Activated CD8-positive, alpha-beta T cell treated with anti-CD3 and anti-CD28 coated beads, Interleukin-2, amount 10 ng/mL, durations not matched to agents 7 days and 5 days (primary cell): ENCODE measurements at regions of chr17 and their contacts with region 1.

Region 1: DNA sequence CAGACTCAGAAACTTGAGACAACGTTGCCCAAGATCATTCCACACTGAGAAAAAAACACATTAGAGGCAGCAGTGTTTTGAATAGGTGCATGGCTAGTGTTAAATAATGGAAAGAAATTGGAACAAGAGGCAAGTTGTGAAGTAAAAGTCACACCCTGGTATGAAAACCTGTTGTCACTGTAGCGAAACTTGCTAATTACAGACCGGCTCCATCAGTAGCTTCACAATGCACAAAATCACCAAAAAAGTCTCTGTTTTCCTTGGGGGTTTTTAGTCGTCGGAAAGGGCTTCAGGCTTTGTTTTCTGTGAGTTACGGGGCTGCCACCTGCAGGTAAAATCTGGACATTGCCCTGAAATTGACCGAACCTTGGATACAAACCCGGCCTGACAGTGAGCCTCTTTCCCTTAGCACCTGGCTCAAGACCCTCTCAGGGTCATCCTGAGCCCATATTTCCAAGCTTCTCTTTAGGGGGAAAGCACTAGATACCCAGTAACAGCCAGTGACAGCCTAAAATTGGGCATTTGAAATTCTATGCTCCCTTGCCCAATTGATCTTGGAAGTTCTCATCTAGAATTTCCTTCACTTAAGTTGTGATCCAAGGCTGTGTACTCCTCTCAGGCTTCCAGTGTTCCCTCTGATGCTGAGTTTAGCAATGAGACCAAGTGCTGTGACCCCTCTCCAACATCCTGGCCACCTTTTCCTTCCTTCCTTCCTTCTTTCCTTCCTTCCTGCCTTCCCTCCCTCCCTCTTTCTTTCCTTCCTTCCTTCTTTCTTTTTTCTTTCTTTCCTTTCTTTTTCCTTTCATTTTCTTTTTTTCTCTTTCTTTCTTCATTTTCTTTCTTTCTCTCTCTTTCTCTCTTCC is 7.2 kb upstream of the GRB2 start:
- DNase-seq: peak; percentile 84
- ATAC-seq: peak; percentile 83
- H3K4me3 Mint-ChIP-seq: peak overlapping the region; percentile 55
- H3K27ac Mint-ChIP-seq: peak overlapping the region; percentile 72
- H3K4me1 Mint-ChIP-seq: peaks cover 39% of the 10 kb centered on the region
- H3K27me3 Mint-ChIP-seq: peaks cover 2% of the 10 kb centered on the region

Region 2: DNA sequence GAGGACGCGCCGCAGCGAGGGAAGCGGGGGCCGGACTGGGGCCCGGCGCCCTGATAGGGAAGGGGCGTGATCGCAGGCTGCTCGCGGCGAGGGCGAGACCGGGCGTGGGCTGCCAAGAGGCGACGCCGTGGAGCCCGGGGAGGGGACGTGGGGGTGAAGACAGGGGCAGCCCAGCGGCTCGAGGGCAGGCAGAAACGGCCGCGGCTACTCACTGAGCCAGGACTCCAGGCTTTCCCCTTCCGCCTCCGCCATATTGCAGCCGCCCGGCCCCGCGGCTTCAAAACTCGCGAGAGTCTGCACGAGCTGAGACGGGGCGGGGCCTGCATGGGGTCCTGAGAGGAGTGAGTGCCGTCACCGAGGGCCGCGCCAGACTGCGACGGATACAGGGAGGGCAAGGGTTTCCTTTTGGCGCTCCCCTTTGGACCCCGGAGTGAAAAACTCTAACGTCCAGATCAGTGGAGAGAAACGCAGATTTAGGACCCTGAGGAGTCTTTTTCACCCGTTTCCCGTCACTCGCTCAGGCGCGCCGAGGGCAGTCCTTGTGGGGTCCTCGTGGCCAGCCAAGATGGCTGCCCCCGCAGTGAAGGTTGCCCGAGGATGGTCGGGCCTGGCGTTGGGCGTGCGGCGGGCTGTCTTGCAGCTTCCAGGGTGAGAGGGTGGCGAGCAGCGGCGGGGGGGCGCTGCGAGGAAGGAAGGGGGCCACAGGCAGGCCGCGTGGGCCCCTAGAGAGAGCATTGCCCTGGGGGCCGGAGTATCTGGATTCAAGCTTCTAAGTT is 151.2 kb before region 1 on chr17 and contains the starts of genes GGA3 and MRPS7:
- CTCF ChIA-PET with region 1: interaction called, 20 read pairs
- POLR2A ChIA-PET with region 1: interaction called, 5 read pairs
- DNase-seq: peak; percentile 97
- ATAC-seq: peak; percentile 94
- H3K4me3 Mint-ChIP-seq: peak within 1 kb of the TSS; percentile 95
- H3K27ac Mint-ChIP-seq: peak within 1 kb of the TSS; percentile 99
- H3K4me1 Mint-ChIP-seq: peaks cover 38% of the 10 kb centered on the region
- H3K27me3 Mint-ChIP-seq: no peaks in the 10 kb centered on the region
- total RNA-seq, gene GGA3: 65.7 to 75.4 TPM
- total RNA-seq, gene MRPS7: 62.1 to 66.1 TPM

Region 3: GRCh38 chr17:75289115-75289831 is 123.4 kb before region 1 on chr17 and contains the start of gene SLC25A19:
- CTCF ChIA-PET with region 1: interaction called, 32 read pairs
- POLR2A ChIA-PET with region 1: interaction called, 9 read pairs
- DNase-seq: peak; percentile 99
- ATAC-seq: peak; percentile 92
- H3K4me3 Mint-ChIP-seq: peak within 1 kb of the TSS; percentile 97
- H3K27ac Mint-ChIP-seq: peak within 1 kb of the TSS; percentile 100
- H3K4me1 Mint-ChIP-seq: peaks cover 27% of the 10 kb centered on the region
- H3K27me3 Mint-ChIP-seq: no peaks in the 10 kb centered on the region
- total RNA-seq, gene SLC25A19: 41.1 to 43.6 TPM

Region 4: DNA sequence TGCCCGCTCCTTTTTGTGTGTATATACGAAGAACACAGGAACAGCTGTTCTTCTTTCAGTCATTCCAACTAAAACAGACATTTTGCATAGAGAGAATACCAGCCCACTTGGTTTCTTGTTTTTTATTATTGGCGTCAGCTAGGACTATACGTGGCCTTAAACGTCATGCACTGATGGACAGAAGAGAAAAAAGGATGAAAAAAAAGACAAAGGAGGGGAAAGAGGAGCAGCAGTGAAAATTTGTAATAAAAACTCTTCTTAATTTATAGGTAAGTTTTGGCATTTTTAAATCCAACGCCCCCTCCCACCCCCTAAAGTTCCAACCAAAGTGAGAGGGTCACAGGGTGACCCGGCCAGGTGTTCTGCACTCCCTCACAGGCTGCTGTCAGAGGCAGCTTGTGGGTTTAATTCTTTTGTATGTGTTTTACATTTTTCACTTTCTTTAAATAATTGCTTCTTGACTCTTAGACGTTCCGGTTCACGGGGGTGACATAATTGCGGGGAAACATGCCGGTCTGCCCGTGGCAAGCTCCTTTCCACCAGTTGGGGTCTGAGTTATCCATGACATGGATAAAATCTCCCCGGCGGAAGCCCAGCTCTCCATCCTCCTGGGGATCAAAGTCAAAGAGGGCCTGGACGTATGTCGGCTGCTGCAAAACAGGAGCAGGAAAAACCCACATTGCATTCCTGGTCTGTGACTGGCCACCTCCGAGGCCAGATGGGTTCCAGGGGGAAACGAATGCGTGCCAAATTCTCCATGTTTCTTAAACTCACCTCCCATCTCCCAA is 92.6 kb before region 1 on chr17:
- CTCF ChIA-PET with region 1: interaction called, 50 read pairs
- POLR2A ChIA-PET with region 1: no interaction called
- DNase-seq: no peak
- ATAC-seq: no peak
- H3K4me3 Mint-ChIP-seq: no peak overlapping the region
- H3K27ac Mint-ChIP-seq: peak overlapping the region; percentile 57
- H3K4me1 Mint-ChIP-seq: peaks cover 28% of the 10 kb centered on the region
- H3K27me3 Mint-ChIP-seq: no peaks in the 10 kb centered on the region

Region 5: GRCh38 chr17:75393523-75394331 is 19.0 kb before region 1 on chr17:
- CTCF ChIA-PET with region 1: interaction called, 14 read pairs
- POLR2A ChIA-PET with region 1: interaction called, 3 read pairs
- DNase-seq: peak; percentile 89
- ATAC-seq: peak; percentile 95
- H3K4me3 Mint-ChIP-seq: peak overlapping the region; percentile 89
- H3K27ac Mint-ChIP-seq: peak overlapping the region; percentile 73
- H3K4me1 Mint-ChIP-seq: peaks cover 68% of the 10 kb centered on the region
- H3K27me3 Mint-ChIP-seq: no peaks in the 10 kb centered on the region

Region 6: DNA sequence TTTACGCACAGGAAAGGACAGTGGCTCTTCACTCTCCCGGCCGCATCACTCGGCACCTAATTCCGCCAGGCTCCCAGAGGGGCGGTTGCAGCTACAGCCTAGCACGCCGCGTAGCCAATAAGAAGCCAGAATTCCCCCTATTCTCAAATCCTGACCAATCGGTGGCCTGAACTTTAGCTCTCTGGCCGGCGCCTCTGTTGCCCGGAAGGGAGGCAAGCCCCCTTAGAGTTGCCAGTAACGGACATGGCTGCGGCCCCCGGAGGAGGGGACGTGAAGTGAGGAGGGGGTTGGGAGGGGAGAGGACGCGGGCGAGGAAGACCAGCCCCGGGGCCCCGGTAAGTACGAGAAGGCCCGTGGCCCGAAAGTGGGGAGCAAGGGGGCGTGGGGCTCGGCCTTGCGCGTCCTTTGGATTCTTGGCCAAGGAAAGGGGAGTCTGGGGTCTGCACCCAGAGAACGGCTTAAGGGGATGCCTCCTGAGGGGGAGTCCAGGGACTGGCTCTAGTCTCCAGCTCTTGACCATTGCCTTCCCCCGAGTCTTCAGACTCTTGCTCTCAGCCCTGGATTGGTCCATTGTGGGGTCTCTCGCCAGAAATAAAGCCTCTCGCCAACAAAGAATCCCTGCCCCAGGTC is 43.8 kb after region 1 on chr17 and contains the start of gene TMEM94:
- CTCF ChIA-PET with region 1: interaction called, 14 read pairs
- POLR2A ChIA-PET with region 1: no interaction called
- DNase-seq: peak; percentile 96
- ATAC-seq: peak; percentile 98
- H3K4me3 Mint-ChIP-seq: peak within 1 kb of the TSS; percentile 87
- H3K27ac Mint-ChIP-seq: peak within 1 kb of the TSS; percentile 93
- H3K4me1 Mint-ChIP-seq: peaks cover 43% of the 10 kb centered on the region
- H3K27me3 Mint-ChIP-seq: no peaks in the 10 kb centered on the region
- total RNA-seq, gene TMEM94: 81.9 to 84.8 TPM